Colonic mucosa (tissue), 4 donors: ENCODE measurements at regions of chr11 and their contacts with region 1.

Region 1: GRCh38 chr11:128831174-128832120 is 35.6 kb downstream of the KCNJ1 start:
- DNase-seq: peak; percentile 85
- H3K4me3 ChIP-seq: no peak overlapping the region
- H3K27ac ChIP-seq: no peak overlapping the region
- H3K4me1 ChIP-seq: no peaks in the 10 kb centered on the region
- H3K27me3 ChIP-seq: no peaks in the 10 kb centered on the region
- CTCF ChIP-seq: peak; percentile 90

Region 2: GRCh38 chr11:128039140-128040021 is 792.1 kb before region 1 on chr11:
- intact Hi-C with region 1: loop called (anchors 5 kb)
- DNase-seq: peak; percentile 45
- H3K4me3 ChIP-seq: no peak overlapping the region
- H3K27ac ChIP-seq: no peak overlapping the region
- H3K4me1 ChIP-seq: no peaks in the 10 kb centered on the region
- H3K27me3 ChIP-seq: no peaks in the 10 kb centered on the region
- CTCF ChIP-seq: no peak

Region 3: GRCh38 chr11:128157423-128158298 is 673.8 kb before region 1 on chr11:
- intact Hi-C with region 1: loop called (anchors 5 kb)
- DNase-seq: peak; percentile 60
- H3K4me3 ChIP-seq: no peak overlapping the region
- H3K27ac ChIP-seq: no peak overlapping the region
- H3K4me1 ChIP-seq: no peaks in the 10 kb centered on the region
- H3K27me3 ChIP-seq: no peaks in the 10 kb centered on the region
- CTCF ChIP-seq: peak; percentile 78

Region 4: GRCh38 chr11:128172046-128172878 is 659.2 kb before region 1 on chr11:
- intact Hi-C with region 1: loop called (anchors 5 kb)
- DNase-seq: peak; percentile 81
- H3K4me3 ChIP-seq: no peak overlapping the region
- H3K27ac ChIP-seq: no peak overlapping the region
- H3K4me1 ChIP-seq: no peaks in the 10 kb centered on the region
- H3K27me3 ChIP-seq: no peaks in the 10 kb centered on the region
- CTCF ChIP-seq: peak; percentile 62

Region 5: GRCh38 chr11:128290106-128290840 is 541.2 kb before region 1 on chr11:
- intact Hi-C with region 1: loop called (anchors 5 kb)
- DNase-seq: peak; percentile 80
- H3K4me3 ChIP-seq: peak overlapping the region; percentile 19
- H3K27ac ChIP-seq: peak overlapping the region; percentile 77
- H3K4me1 ChIP-seq: peaks cover 11% of the 10 kb centered on the region
- H3K27me3 ChIP-seq: no peaks in the 10 kb centered on the region
- CTCF ChIP-seq: peak; percentile 80

Region 6: DNA sequence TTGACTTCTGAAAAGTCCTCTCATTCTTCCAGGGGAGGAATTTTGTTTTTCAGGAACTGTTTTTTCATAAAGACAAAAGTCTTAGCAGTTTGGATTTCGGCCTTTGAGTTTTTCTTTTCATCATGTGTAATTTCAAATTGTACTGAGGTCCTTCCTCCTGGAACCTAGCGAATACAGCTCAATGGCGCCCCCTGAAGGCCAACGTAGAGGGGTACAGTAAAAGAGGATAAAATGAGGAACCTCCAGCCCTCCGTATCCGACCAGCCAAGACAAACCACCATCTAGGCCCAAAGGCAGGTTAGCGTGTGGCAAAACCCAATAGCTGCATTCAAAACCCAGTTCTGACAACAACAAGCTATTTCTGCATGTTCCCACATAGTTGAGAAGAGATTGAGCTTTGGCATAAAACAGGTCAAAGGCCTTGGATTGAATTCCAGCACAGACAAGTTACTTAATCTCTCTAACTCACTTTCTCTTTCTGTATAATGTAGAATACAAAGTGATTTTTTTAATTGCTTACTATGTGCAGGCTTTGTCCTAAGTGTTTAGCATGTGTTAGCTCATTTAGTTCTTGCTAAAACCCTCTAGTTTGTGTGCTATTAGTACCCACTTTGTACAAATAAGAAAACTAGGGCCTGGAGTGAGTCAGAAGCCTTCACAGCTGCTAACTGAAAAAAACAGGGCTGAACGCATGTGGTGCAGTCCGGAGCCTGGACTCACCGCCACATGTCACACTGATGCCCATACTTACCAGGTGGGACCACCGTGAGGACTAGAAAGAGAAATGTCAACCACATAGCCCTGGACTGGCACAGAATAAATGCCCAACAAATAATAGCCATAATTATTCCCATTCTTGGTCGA is 200.8 kb before region 1 on chr11:
- intact Hi-C with region 1: loop called (anchors 10 kb)
- DNase-seq: peak; percentile 93
- H3K4me3 ChIP-seq: no peak overlapping the region
- H3K27ac ChIP-seq: no peak overlapping the region
- H3K4me1 ChIP-seq: no peaks in the 10 kb centered on the region
- H3K27me3 ChIP-seq: no peaks in the 10 kb centered on the region
- CTCF ChIP-seq: peak; percentile 92

Region 7: GRCh38 chr11:128720522-128720985 is 110.9 kb before region 1 on chr11:
- intact Hi-C with region 1: no loop called
- DNase-seq: no peak
- H3K4me3 ChIP-seq: no peak overlapping the region
- H3K27ac ChIP-seq: peak overlapping the region; percentile 53
- H3K4me1 ChIP-seq: peaks cover 7% of the 10 kb centered on the region
- H3K27me3 ChIP-seq: no peaks in the 10 kb centered on the region
- CTCF ChIP-seq: no peak

Region 8: GRCh38 chr11:128776424-128777284 is 54.8 kb before region 1 on chr11:
- intact Hi-C with region 1: loop called (anchors 5 kb)
- DNase-seq: no peak
- H3K4me3 ChIP-seq: no peak overlapping the region
- H3K27ac ChIP-seq: no peak overlapping the region
- H3K4me1 ChIP-seq: no peaks in the 10 kb centered on the region
- H3K27me3 ChIP-seq: no peaks in the 10 kb centered on the region
- CTCF ChIP-seq: no peak